ENCODE measurements at regions of chr2 and their contacts with region 1.

Region 1: DNA sequence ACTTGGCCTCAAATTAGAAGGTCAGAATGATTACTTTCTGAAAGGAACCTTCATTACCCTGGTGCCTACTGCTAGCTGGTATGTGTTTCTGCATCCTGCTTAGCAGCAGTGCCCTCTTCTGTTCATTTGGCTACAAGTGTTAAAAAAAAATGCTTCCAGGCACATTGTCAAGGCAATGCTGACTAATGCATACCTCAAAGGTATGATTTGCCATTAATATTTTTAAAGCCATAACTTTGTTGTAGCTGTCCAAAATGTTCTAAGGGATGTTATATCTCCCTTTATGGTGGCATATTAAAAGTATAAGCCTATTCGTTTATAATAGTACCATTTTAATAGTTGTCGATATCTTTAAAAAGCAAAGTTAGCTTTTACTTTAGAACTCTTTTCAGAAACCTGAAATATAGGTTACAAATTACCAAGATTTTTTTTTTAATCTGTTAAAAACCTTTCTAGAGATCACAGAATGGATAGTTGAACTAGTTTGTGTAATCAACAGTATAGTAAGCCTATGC is 52.0 kb upstream of the FAM171B start:
- DNase-seq: peak; percentile 81
- H3K4me3 Mint-ChIP-seq: no peak overlapping the region
- H3K27ac Mint-ChIP-seq: no peak overlapping the region
- H3K4me1 Mint-ChIP-seq: peaks cover 24% of the 10 kb centered on the region
- H3K27me3 Mint-ChIP-seq: no peaks in the 10 kb centered on the region

Region 2: DNA sequence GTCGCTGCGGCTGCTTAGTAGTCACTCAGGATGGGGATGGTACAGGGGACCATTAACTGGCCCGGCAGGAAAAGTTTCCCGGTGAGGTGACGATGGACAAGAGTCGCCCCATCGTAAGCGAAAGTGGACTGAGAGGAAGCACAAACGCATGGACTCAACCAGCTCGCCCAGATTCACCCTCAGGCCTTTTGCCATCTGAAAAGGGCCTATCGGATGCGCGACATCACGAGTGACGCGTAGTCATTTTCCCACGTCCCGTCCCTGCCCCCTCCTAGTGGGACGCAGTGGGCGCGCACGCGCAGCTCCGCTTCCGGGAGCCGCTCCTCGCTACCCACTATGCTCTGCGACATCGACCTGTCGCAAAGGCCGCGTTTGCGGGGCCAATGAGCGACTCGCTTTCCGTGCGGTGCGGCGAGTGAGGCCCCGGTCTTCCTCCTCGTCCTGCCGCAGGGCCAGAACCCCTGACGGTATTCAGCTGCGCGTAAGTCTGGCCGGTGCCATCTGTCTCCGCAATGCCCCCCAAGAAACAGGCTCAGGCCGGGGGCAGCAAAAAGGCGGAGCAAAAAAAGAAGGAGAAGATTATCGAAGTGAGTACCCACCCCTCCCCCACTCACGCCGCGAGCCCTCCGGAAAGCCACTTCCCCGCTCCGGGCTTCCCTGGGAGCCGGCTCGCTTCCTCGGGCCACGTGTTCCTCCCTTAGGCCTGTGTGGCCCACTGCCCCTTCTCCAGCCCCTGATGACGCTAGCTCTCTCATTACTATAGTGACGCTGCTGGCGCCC is 155.8 kb before region 1 on chr2 and contains the start of gene ZC3H15:
- intact Hi-C with region 1: loop called (anchors 1 kb)
- DNase-seq: peak; percentile 99
- H3K4me3 Mint-ChIP-seq: peak within 1 kb of the TSS; percentile 95
- H3K27ac Mint-ChIP-seq: peak within 1 kb of the TSS; percentile 99
- H3K4me1 Mint-ChIP-seq: peaks cover 48% of the 10 kb centered on the region
- H3K27me3 Mint-ChIP-seq: no peaks in the 10 kb centered on the region
- total RNA-seq, gene ZC3H15: 103 and 106 TPM in 2 replicates

Region 3: DNA sequence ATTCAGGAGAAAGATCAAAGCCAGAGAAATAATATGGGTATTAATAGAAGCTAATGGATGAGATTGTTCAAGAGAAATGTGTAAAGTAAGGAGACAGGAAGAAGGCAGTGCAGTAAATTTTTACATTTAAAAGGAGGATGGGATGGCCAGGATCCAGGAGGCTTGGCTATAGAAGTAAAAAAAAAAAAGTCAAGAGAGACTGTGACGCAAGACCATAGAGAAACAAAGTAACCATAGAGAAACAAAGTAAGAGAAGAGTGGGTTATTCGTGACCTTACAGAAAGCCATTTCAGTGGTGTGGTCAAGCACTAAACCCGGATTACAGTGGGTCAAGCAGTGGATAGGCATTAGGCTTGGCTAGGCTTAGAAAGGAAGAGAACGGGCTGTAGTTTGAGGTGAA is 41.5 kb after region 1 on chr2:
- intact Hi-C with region 1: no loop called
- DNase-seq: no peak
- H3K4me3 Mint-ChIP-seq: no peak overlapping the region
- H3K27ac Mint-ChIP-seq: no peak overlapping the region
- H3K4me1 Mint-ChIP-seq: no peaks in the 10 kb centered on the region
- H3K27me3 Mint-ChIP-seq: peaks cover 5% of the 10 kb centered on the region

Measured in activated CD4-positive, alpha-beta T cell treated with anti-CD3 and anti-CD28 coated beads, Interleukin-2, amount 10 ng/mL, durations not matched to agents 24 days and 14 days (primary cell).